Ovary (tissue), 10 donors: ENCODE measurements at regions of chr18 and their contacts with region 1.

Region 1: GRCh38 chr18:49486953-49487710 is at the start of gene C18orf32:
- DNase-seq: peak; percentile 93 to 97 (median 95)
- H3K4me3 ChIP-seq: peak within 1 kb of the TSS; percentile 94
- H3K27ac ChIP-seq: peak within 1 kb of the TSS; percentile 51 to 94
- H3K4me1 ChIP-seq: peaks cover 6% of the 10 kb centered on the region
- H3K27me3 ChIP-seq: no peaks in the 10 kb centered on the region
- CTCF ChIP-seq: no peak
- EP300 ChIP-seq: no peak
- POLR2A ChIP-seq: peak; percentile 93
- total RNA-seq, gene C18orf32: 35.4 to 51.4 (median 44.9) TPM

Region 2: DNA sequence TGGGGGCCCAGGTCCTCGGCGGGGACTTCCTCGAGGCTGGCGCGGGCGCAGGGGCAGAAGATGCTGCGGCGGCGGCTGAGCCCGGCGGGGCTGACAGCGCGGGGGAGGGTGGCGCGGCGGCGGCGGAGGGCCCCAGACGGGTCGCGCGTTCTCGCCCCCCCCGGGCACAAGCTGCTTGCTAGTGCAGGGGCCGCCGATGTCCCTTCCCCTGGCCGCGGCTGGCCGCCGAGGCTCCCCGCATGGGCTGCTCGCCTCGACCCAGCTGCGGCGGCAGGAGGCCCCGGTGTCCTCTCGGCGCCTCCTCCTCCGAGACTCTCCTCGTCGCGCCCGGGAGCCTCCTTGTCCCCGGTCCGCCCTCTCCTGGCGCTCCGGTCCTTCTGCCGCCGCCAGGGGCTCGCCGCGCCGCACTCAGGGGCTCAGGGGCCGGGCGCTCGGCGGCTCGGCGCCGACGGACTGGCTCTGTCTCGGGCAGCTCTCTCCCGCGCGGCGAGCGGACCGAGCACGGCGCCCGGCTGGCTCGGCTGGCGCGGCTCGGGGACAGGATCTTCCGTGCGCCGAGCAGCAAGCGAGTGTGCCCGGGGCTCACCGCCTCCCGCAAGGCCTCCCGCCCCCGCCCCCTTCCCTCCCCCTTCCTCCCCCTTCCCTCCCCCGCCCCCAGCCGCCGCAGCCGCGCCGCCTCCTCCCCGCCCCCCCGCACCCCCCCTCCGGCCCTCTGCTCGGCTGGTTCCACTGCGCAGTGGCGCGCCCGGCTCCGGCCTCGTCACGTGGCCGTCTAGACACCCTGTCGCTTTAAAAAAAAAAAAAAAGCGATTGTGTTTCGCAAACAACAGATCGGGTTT is 535.5 kb before region 1 on chr18:
- intact Hi-C with region 1: loop called in 1 of 4 experiments (anchors 10 kb)
- DNase-seq: peak; percentile 82 to 91 (median 89)
- H3K4me3 ChIP-seq: peak overlapping the region; percentile 77
- H3K27ac ChIP-seq: peak overlapping the region; percentile 91 to 96
- H3K4me1 ChIP-seq: peaks cover 11% of the 10 kb centered on the region
- H3K27me3 ChIP-seq: no peaks in the 10 kb centered on the region
- CTCF ChIP-seq: peak in 2 of 3 donors; percentile 50 to 73
- EP300 ChIP-seq: no peak
- POLR2A ChIP-seq: peak; percentile 59

Region 3: GRCh38 chr18:50287441-50288347 is 800.6 kb after region 1 on chr18 and contains the start of gene CXXC1:
- intact Hi-C with region 1: loop called in 1 of 4 experiments (anchors 10 kb)
- DNase-seq: peak; percentile 96 to 99 (median 98)
- H3K4me3 ChIP-seq: peak within 1 kb of the TSS; percentile 59
- H3K27ac ChIP-seq: peak within 1 kb of the TSS; percentile 69 to 79
- H3K4me1 ChIP-seq: peaks cover 5% of the 10 kb centered on the region
- H3K27me3 ChIP-seq: no peaks in the 10 kb centered on the region
- CTCF ChIP-seq: peak; percentile 8 to 86 (median 80)
- EP300 ChIP-seq: no peak
- POLR2A ChIP-seq: no peak
- total RNA-seq, gene CXXC1: 39.1 to 77.9 (median 70.7) TPM